GM12878 (cell line): ENCODE measurements at regions of chr20 and their contacts with region 1.

Region 1: DNA sequence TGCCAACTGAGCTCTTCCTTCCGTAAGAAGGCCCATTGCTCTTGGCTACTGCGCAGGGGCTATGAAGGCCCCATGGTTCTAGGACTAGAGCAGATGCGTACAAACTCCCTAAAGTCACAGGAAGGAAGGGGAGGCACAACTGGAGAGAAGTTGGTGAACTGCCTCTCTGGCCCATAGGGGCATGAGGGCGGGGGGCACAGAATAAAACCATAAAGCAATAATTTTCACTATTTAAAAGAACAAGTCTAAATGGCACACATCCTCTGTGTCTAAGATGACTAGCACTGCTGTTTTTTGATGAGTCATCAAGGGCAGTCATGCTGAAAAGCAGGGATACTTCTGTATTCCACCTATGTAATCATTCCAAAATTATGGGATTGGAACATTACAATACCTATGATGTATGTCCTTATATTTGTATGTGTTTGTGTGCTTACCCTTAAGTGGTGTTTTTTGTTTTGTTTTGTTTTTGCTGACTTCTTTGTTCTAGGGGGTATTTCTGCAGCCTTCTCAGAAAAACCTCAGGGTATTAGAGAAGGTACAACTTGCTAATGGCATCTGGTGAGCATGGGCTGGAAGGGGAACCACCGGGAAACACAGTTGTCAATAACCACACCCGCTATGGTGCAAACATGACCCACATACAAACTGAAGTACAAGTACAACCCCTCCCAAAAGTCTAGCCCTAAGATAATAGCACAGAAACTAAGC is 36.9 kb downstream of the B4GALT5 start:
- DNase-seq: peak; percentile 82
- ATAC-seq: peak; percentile 79
- H3K4me3 ChIP-seq: peak overlapping the region; percentile 41
- H3K27ac ChIP-seq: peak overlapping the region; percentile 87
- H3K4me1 ChIP-seq: peaks cover 78% of the 10 kb centered on the region
- H3K27me3 ChIP-seq: no peaks in the 10 kb centered on the region
- CTCF ChIP-seq: no peak
- EP300 ChIP-seq: peak; percentile 40 to 87; a peak in 3 of 4 replicates
- POLR2A ChIP-seq: no peak
- RAD21 ChIP-seq: 0 out of 2 replicates have a peak, but pooled peaks have one; percentile 6

Region 2: GRCh38 chr20:49631061-49631788 is 45.5 kb before region 1 on chr20:
- CTCF ChIA-PET with region 1: interaction called, 4 read pairs
- POLR2A ChIA-PET with region 1: interaction called, 6 read pairs
- RAD21 ChIA-PET with region 1: interaction called, 53 read pairs
- SMC1A ChIA-PET with region 1: interaction called, 110 read pairs
- in situ Hi-C with region 1: no loop called
- intact Hi-C with region 1: loop called (anchors 1 kb)
- DNase-seq: no peak
- ATAC-seq: peak; percentile 75
- H3K4me3 ChIP-seq: no peak overlapping the region
- H3K27ac ChIP-seq: peak overlapping the region; percentile 77
- H3K4me1 ChIP-seq: peaks cover 53% of the 10 kb centered on the region
- H3K27me3 ChIP-seq: no peaks in the 10 kb centered on the region
- CTCF ChIP-seq: no peak
- EP300 ChIP-seq: peak in 1 of 2 experiments; percentile 39; a peak in 1 of 4 replicates
- POLR2A ChIP-seq: no peak; the same call in 1 of the 2 replicates
- RAD21 ChIP-seq: no peak

Region 3: DNA sequence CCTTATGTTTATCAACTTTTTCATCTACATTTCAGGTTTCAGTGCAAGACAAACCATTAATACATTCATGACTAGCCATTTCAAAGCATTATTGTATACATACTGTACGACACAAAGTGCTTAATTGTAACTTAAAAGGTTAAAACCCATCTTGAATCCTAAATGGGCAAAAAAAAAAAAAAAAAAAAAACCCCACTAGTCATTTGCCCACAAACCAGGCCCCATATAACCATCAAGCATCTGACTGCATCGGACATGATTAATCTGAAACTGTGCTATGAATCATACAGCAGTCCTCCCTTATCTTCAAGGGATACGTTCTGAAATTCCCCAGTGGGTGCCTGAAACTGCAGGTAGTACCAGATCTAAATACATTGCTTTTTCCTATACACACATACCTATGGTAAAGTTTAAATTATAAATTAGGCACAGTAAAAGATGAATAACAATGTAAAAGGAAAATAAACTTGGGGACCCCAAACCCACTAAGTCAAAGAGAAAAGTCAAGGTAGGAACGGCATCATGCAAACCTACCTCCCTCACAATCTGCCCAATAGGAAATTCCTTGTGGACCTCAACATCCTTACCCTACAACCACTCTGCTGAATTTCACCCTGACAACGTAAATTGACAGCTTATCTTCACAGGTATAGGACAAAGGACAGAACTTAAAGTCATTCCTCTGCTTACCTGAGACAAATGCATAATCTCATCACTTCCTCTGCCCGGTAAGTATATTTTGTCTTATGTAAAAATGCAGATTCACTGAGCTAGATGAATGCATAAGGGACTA is 22.7 kb after region 1 on chr20:
- CTCF ChIA-PET with region 1: interaction called, 16 read pairs
- POLR2A ChIA-PET with region 1: interaction called, 34 read pairs
- RAD21 ChIA-PET with region 1: interaction called, 27 read pairs
- SMC1A ChIA-PET with region 1: interaction called, 89 read pairs
- in situ Hi-C with region 1: no loop called
- intact Hi-C with region 1: no loop called
- DNase-seq: no peak
- ATAC-seq: peak; percentile 90
- H3K4me3 ChIP-seq: peak overlapping the region; percentile 40
- H3K27ac ChIP-seq: peak overlapping the region; percentile 73
- H3K4me1 ChIP-seq: peaks cover 59% of the 10 kb centered on the region
- H3K27me3 ChIP-seq: no peaks in the 10 kb centered on the region
- CTCF ChIP-seq: no peak
- EP300 ChIP-seq: peak; percentile 53 to 75; a peak in 1 of 4 replicates
- POLR2A ChIP-seq: no peak
- RAD21 ChIP-seq: no peak

Region 4: DNA sequence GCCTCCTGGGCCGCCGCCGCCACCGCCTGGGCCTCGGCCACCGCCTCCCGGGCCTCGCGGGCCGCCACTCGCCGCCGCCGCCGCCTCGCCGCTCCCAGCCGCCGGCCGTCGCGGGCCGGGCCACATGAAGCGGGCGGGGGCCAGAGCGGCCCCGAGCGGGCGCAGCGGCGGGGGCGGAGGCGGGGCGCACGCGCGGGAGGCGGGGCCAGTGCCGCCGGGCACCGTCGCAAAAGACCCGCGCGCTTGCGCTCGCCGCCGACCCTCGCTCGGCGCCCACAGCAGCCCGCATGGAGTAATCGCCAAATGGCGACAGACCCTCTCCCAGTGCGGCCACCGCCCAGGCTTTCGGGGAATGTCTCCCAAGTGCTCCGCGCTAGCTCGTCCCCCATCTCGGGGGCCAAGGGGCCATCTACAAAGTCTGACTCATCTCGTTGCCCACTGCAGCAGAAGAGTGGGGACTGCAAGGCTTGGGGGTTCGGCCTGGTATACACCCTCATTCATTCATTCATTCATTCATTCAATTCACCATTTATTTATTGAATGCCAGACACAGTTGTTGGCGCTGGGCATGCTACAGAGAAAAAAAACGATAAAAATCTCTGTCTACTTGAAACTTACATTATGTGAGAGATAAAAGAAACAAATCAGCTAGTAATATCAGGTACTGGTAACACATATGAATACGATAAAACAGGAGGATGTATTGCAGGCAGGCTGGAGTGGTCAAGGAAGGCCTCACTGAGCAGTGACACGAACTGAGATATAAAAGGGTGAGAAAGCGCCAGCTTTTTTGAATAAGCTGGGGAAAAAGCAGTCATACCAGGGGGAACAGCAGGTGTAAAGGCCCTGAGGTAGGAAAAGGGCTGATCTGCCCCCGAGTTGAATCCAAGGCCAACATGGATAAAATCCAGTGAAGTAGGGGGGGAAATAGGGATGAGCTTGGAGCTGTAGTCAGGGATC is 37.3 kb after region 1 on chr20 and contains the start of gene B4GALT5:
- CTCF ChIA-PET with region 1: interaction called, 8 read pairs
- POLR2A ChIA-PET with region 1: interaction called, 11 read pairs
- RAD21 ChIA-PET with region 1: interaction called, 38 read pairs
- SMC1A ChIA-PET with region 1: interaction called, 89 read pairs
- in situ Hi-C with region 1: no loop called
- intact Hi-C with region 1: no loop called
- DNase-seq: no peak
- ATAC-seq: peak; percentile 76
- H3K4me3 ChIP-seq: peak within 1 kb of the TSS; percentile 97
- H3K27ac ChIP-seq: peak within 1 kb of the TSS; percentile 80
- H3K4me1 ChIP-seq: peaks cover 5% of the 10 kb centered on the region; the same call in 1 of the 2 replicates
- H3K27me3 ChIP-seq: no peaks in the 10 kb centered on the region
- CTCF ChIP-seq: no peak
- EP300 ChIP-seq: no peak
- POLR2A ChIP-seq: no peak
- RAD21 ChIP-seq: no peak
- polyA plus RNA-seq, gene B4GALT5: 10.0 to 15.3 TPM

Region 5: GRCh38 chr20:49821870-49822331 is 145.2 kb after region 1 on chr20:
- CTCF ChIA-PET with region 1: interaction called, 10 read pairs
- POLR2A ChIA-PET with region 1: interaction called, 4 read pairs
- RAD21 ChIA-PET with region 1: interaction called, 8 read pairs
- SMC1A ChIA-PET with region 1: interaction called, 4 read pairs
- in situ Hi-C with region 1: no loop called
- intact Hi-C with region 1: no loop called
- DNase-seq: no peak
- ATAC-seq: peak; percentile 68
- H3K4me3 ChIP-seq: no peak overlapping the region
- H3K27ac ChIP-seq: 0 out of 2 replicates have a peak overlapping the region, but pooled peaks have one; percentile 14
- H3K4me1 ChIP-seq: peaks cover 22% of the 10 kb centered on the region
- H3K27me3 ChIP-seq: no peaks in the 10 kb centered on the region
- CTCF ChIP-seq: peak; percentile 34 to 55 (median 39); a peak in 5 of 6 replicates
- EP300 ChIP-seq: 0 out of 4 replicates have a peak, but pooled peaks of 1 of the 2 experiments have one; percentile 18
- POLR2A ChIP-seq: no peak
- RAD21 ChIP-seq: peak; percentile 61

Region 6: DNA sequence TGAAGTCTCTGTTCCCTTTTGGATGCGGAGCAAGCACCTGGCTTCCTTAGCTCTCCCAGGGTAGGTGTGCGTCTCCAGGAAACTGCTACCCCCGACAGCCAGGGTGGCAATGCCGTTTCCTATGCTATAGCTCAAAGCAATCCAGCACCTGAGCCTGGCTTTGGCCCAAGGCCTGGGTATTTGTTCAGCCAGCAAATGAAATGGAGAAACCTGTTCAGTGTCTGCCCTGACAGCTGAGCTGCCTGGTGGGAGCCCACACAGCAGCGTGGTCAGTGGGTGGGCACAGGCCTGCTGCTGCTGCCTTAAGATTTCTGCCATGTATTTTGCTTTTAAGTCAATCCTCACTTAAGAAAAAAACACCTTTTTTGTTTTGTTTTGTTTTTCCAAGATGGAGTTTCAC is 224.9 kb after region 1 on chr20:
- CTCF ChIA-PET with region 1: no interaction called
- POLR2A ChIA-PET with region 1: no interaction called
- RAD21 ChIA-PET with region 1: no interaction called
- SMC1A ChIA-PET with region 1: no interaction called
- in situ Hi-C with region 1: no loop called
- intact Hi-C with region 1: no loop called
- DNase-seq: no peak
- ATAC-seq: no peak
- H3K4me3 ChIP-seq: no peak overlapping the region
- H3K27ac ChIP-seq: no peak overlapping the region
- H3K4me1 ChIP-seq: no peaks in the 10 kb centered on the region
- H3K27me3 ChIP-seq: no peaks in the 10 kb centered on the region
- CTCF ChIP-seq: no peak
- EP300 ChIP-seq: no peak
- POLR2A ChIP-seq: no peak
- RAD21 ChIP-seq: no peak